Activated CD8-positive, alpha-beta T cell treated with anti-CD3 and anti-CD28 coated beads, Interleukin-2, amount 10 ng/mL, durations not matched to agents 7 days and 5 days (primary cell): ENCODE measurements at regions of chr19 and their contacts with region 1.

Region 1: GRCh38 chr19:17859533-17860330 is at the start of gene RPL18A:
- DNase-seq: peak; percentile 100
- ATAC-seq: peak; percentile 97
- H3K4me3 Mint-ChIP-seq: peak within 1 kb of the TSS; percentile 91
- H3K27ac Mint-ChIP-seq: peak within 1 kb of the TSS; percentile 96
- H3K4me1 Mint-ChIP-seq: peaks cover 33% of the 10 kb centered on the region
- H3K27me3 Mint-ChIP-seq: peaks cover 2% of the 10 kb centered on the region
- total RNA-seq, gene RPL18A: 2,078 to 2,184 TPM

Region 2: DNA sequence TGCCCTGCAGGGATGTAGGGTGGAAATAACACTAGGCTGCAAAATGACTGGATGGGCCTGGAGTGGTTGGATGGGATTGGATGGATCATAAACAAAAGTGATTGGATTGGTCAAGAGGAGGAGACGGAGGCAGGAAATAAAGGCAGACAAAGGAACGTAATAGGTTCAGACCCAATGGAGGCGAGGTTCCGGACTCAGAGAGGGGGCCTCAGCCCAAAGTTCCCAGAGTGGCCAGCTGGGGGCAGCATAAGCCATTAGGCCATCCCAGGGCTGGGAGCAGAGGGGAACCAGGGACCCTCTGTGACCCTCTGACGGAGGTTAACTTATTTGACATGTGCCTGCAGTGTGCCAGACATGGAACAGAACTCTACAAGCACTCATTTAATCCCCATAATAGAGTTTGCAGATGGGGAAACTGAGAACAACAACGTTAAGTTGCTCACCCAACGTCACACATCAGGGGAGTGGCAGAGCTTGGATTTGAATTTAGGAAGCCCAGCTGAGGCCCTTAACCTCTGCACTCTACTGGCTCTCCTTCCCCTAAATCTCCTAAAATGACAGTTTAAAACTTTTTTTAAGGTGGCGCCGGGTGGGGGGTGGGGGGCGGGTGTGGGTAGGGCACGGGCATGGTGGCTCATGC is 155.8 kb before region 1 on chr19:
- CTCF ChIA-PET with region 1: interaction called, 16 read pairs
- POLR2A ChIA-PET with region 1: interaction called, 3 read pairs
- DNase-seq: peak; percentile 74
- ATAC-seq: peak; percentile 93
- H3K4me3 Mint-ChIP-seq: no peak overlapping the region
- H3K27ac Mint-ChIP-seq: no peak overlapping the region
- H3K4me1 Mint-ChIP-seq: no peaks in the 10 kb centered on the region
- H3K27me3 Mint-ChIP-seq: peaks cover 3% of the 10 kb centered on the region

Region 3: DNA sequence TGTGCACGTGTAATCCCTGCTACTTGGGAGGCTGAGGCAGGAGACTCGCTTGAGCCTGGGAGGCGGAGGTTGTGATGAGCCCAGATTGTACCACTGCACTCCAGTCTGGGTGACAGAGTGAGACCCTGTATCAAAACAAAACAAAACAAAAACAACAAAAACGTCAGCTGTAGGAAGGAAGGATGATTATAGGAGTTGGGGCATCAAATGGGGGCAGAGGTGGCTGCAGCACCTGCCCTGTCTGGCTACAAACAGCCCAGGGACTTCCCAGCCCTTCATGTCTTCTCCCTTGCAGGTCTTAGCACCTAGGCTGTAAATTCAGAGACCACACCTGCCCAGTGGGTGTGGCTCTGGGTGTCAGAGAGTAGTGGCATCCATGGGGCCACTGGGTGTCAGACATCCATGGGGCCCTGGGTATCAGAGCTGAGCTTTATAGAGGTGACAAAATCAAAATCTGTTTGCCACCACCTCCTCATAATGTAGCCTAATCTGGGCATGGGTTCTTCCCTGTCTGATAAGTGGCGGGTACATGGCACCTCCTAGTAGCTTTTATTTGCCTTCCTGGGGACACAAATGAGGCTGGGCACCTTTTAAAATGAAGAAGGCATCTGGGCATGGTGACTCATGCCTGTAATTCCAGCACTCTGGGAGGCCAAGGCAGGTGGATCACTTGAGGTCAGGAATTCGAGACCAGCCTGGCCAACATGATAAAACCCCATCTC is 69.5 kb before region 1 on chr19:
- CTCF ChIA-PET with region 1: interaction called, 10 read pairs
- POLR2A ChIA-PET with region 1: no interaction called
- DNase-seq: no peak
- ATAC-seq: no peak
- H3K4me3 Mint-ChIP-seq: no peak overlapping the region
- H3K27ac Mint-ChIP-seq: peak overlapping the region; percentile 18
- H3K4me1 Mint-ChIP-seq: peaks cover 44% of the 10 kb centered on the region
- H3K27me3 Mint-ChIP-seq: peaks cover 8% of the 10 kb centered on the region

Region 4: DNA sequence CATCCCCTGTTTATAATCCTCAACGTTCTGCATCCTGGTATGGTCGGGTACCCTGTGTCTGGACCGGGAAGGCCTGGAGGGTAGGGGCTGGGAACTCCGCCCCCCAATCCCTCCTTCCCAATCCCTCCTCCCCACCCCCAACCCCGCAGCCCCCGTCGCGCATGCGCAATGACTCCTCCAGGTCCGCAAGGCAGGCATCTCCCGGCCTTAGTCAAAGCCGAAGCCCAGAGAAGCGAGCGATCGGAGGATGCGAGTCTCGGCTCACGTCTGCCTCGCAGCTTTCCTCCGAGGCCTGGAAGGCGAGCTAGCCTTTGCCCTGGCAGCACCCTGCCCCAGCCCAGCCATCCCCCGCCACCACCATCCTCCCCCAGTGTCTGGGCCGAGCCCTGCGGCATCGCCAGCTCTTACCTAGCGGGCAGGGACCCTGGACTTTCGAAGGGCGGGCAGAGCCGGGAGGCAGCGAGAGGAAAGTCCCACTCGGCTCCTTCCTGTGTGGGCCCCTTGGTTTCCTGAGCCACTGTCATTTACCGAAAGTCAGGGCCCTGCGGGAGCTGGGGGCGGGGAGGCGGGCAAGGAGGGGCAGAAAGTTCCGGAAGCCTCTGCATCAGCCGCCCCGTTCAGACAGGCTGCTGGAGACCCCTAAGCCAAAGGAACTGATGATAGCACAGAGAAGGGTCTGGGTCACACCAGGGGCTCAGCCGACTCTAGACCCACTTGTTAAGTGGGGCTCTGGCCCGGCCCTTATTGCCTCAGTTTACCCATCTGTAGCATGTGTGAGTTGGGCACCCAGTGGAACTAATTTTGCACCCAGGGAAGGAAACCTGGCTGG is 12.0 kb before region 1 on chr19 and contains the start of gene JAK3:
- CTCF ChIA-PET with region 1: interaction called, 44 read pairs
- POLR2A ChIA-PET with region 1: interaction called, 34 read pairs
- DNase-seq: peak; percentile 90
- ATAC-seq: peak; percentile 80
- H3K4me3 Mint-ChIP-seq: peak within 1 kb of the TSS; percentile 91
- H3K27ac Mint-ChIP-seq: peak within 1 kb of the TSS; percentile 96
- H3K4me1 Mint-ChIP-seq: peaks cover 75% of the 10 kb centered on the region
- H3K27me3 Mint-ChIP-seq: no peaks in the 10 kb centered on the region
- total RNA-seq, gene JAK3: 125 to 127 TPM

Region 5: GRCh38 chr19:17932485-17933338 is 73.0 kb after region 1 on chr19 and contains the start of gene CCDC124:
- CTCF ChIA-PET with region 1: interaction called, 289 read pairs
- POLR2A ChIA-PET with region 1: interaction called, 69 read pairs
- DNase-seq: peak; percentile 95
- ATAC-seq: peak; percentile 99
- H3K4me3 Mint-ChIP-seq: peak within 1 kb of the TSS; percentile 83
- H3K27ac Mint-ChIP-seq: peak within 1 kb of the TSS; percentile 96
- H3K4me1 Mint-ChIP-seq: peaks cover 21% of the 10 kb centered on the region
- H3K27me3 Mint-ChIP-seq: peaks cover 2% of the 10 kb centered on the region
- total RNA-seq, gene CCDC124: 85.8 to 88.0 TPM

Region 6: GRCh38 chr19:17947815-17948513 is 88.2 kb after region 1 on chr19:
- CTCF ChIA-PET with region 1: interaction called, 10 read pairs
- POLR2A ChIA-PET with region 1: no interaction called
- DNase-seq: peak; percentile 95
- ATAC-seq: peak; percentile 70
- H3K4me3 Mint-ChIP-seq: peak overlapping the region; percentile 70
- H3K27ac Mint-ChIP-seq: no peak overlapping the region
- H3K4me1 Mint-ChIP-seq: peaks cover 41% of the 10 kb centered on the region
- H3K27me3 Mint-ChIP-seq: peaks cover 36% of the 10 kb centered on the region